HepG2 (cell line): ENCODE measurements at regions of chr6 and their contacts with region 1.

Region 1: GRCh38 chr6:80020381-80021120 is 16.1 kb downstream of the TTK start:
- DNase-seq: peak; percentile 64
- ATAC-seq: peak; percentile 93
- H3K4me3 ChIP-seq: peak overlapping the region in 2 of 3 experiments; percentile 25 to 52; a peak in 3 of 6 replicates
- H3K27ac ChIP-seq: peak overlapping the region; percentile 50
- H3K4me1 ChIP-seq: peaks cover 26% of the 10 kb centered on the region
- H3K27me3 ChIP-seq: no peaks in the 10 kb centered on the region
- CTCF ChIP-seq: no peak
- EP300 ChIP-seq: no peak
- POLR2A ChIP-seq: no peak
- RAD21 ChIP-seq: no peak

Region 2: DNA sequence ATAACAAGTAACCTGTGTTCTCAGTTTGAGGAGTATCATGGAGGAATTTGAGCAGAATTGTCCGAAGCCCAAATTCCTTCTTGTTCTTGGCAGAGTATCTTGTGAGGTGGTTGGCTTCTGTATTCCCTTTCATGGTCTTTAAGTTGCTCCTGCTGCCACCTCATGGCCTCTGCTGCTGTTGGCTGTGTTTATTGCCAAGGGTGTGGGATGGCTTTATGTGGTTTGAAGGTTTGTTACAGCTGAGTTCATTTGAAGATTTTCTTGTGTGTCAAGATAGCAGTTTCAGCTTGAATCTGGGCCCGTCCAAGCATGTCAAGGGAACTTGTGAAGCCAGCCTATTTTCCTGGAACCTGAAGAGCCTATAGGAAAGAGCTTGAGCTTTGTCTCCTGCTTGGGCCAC is 36.3 kb before region 1 on chr6:
- CTCF ChIA-PET with region 1: no interaction called
- POLR2A ChIA-PET with region 1: no interaction called
- in situ Hi-C with region 1: no loop called
- intact Hi-C with region 1: loop called (anchors 1 kb)
- DNase-seq: peak; percentile 14
- ATAC-seq: peak; percentile 88
- H3K4me3 ChIP-seq: no peak overlapping the region; a peak in 1 of 6 replicates
- H3K27ac ChIP-seq: no peak overlapping the region
- H3K4me1 ChIP-seq: peaks cover 23% of the 10 kb centered on the region
- H3K27me3 ChIP-seq: no peaks in the 10 kb centered on the region; a peak in 1 of 5 replicates
- CTCF ChIP-seq: peak; percentile 38; the same call in 1 of the 2 replicates
- EP300 ChIP-seq: no peak
- POLR2A ChIP-seq: no peak
- RAD21 ChIP-seq: no peak

Region 3: GRCh38 chr6:80060774-80061173 is 40.2 kb after region 1 on chr6:
- CTCF ChIA-PET with region 1: no interaction called
- POLR2A ChIA-PET with region 1: no interaction called
- in situ Hi-C with region 1: no loop called
- intact Hi-C with region 1: no loop called
- DNase-seq: no peak
- ATAC-seq: no peak
- H3K4me3 ChIP-seq: no peak overlapping the region
- H3K27ac ChIP-seq: no peak overlapping the region
- H3K4me1 ChIP-seq: no peaks in the 10 kb centered on the region
- H3K27me3 ChIP-seq: no peaks in the 10 kb centered on the region
- CTCF ChIP-seq: no peak
- EP300 ChIP-seq: no peak
- POLR2A ChIP-seq: no peak
- RAD21 ChIP-seq: no peak

Region 4: GRCh38 chr6:80106418-80107235 is 86.1 kb after region 1 on chr6 and contains the start of gene BCKDHB:
- CTCF ChIA-PET with region 1: no interaction called
- POLR2A ChIA-PET with region 1: interaction called, 9 read pairs
- in situ Hi-C with region 1: no loop called
- intact Hi-C with region 1: loop called (anchors 5 kb)
- DNase-seq: peak; percentile 98
- ATAC-seq: peak; percentile 99
- H3K4me3 ChIP-seq: peak within 1 kb of the TSS; percentile 72 to 96 (median 93)
- H3K27ac ChIP-seq: peak within 1 kb of the TSS; percentile 72
- H3K4me1 ChIP-seq: peaks cover 27% of the 10 kb centered on the region
- H3K27me3 ChIP-seq: no peaks in the 10 kb centered on the region; a peak in 1 of 5 replicates
- CTCF ChIP-seq: no peak; the same call in 1 of the 2 replicates
- EP300 ChIP-seq: no peak
- POLR2A ChIP-seq: peak; percentile 92 to 94
- RAD21 ChIP-seq: 0 out of 2 replicates have a peak, but pooled peaks have one; percentile 28
- total RNA-seq, gene BCKDHB: 13.6 and 17.0 TPM in 2 replicates